ENCODE measurements at regions of chr6 and their contacts with region 1.

Region 1: DNA sequence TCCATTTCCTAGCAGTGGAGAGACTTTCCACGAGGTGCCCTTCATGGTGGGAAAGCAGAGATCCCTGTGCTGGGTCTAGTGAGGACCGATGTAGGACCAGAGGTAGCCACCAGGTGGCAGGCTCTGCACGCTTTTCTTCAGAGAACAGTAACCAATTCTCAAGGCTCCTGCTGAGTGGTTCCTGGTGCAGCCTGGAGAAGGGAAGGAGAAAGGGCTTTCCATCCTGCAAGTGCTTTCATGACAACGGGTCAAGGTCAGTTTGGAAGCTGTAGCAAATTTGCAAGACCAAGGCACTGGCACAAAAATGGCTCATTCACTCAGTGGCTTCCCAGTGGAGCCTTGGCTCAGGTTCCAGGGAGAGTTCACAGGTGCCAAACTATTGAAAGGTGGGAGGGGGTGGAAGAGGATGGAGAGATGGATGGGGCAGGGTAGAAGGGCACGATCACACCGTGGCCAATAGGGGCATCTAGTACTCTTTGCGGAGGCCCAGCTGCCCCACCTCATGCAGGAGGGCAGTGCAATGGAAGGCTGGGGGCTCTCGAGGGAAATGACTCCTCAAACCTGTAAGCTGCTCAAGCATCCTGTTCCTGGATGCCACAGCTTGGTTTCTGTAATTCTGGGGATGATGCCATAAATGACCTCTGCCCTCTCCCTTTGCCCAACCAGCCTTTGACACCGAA is 25.5 kb upstream of the KCNK16 start:
- DNase-seq: peak; percentile 84
- H3K4me3 ChIP-seq: no peak overlapping the region; a peak in 1 of 4 replicates
- H3K27ac ChIP-seq: no peak overlapping the region
- H3K4me1 ChIP-seq: peaks cover 0 to 1% of the 10 kb centered on the region in 2 experiments; a peak in 1 of 4 replicates
- H3K27me3 ChIP-seq: no peaks in the 10 kb centered on the region
- CTCF ChIP-seq: peak; percentile 85
- EP300 ChIP-seq: no peak
- RAD21 ChIP-seq: peak; percentile 86

Region 2: DNA sequence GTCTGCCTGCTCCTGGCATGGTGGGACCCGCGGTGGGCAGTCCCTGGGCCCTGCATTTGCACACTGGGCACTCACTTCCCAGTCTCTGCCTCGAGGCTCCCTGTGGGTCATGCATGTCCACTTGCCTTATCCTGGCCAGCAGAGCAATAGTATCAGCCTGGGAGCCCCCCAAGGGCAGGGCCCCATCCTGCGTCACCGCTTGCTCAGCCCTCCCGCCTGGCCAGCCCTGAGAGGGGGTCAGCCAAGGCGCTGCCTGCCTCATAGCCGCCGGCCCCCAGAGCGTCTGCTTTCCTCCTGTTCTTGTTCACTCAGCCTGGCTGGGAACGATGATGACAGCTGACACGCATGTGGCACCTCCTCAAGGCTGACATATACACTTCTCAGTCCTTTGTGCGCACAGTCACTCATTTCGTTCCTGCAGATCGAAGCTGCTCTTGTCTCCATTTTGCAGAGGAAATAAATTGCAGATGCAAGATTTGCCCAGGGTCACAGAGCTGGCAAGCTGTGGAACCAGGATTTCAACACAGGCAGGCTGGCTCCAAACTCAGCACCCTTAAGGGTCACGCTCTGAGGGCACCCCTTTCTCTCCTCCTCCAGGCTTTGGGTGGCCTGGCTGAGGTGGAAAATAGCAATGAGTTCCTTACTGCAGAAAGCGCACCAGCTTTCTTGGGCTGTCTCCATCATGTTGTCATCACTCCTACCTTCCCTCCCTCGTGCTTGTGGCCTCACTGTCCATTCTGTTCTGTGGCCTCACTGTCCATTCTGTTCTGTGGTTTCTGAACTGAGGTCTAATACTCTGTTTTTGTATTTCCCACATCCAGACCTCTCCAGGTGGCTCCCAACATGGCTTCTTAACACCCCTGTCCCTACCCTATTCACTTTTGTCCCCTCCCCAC is 51.1 kb before region 1 on chr6:
- CTCF ChIA-PET with region 1: no interaction called
- POLR2A ChIA-PET with region 1: no interaction called
- DNase-seq: peak; percentile 77
- H3K4me3 ChIP-seq: no peak overlapping the region
- H3K27ac ChIP-seq: no peak overlapping the region
- H3K4me1 ChIP-seq: peaks cover 0 to 10% of the 10 kb centered on the region in 2 experiments; a peak in 1 of 4 replicates
- H3K27me3 ChIP-seq: no peaks in the 10 kb centered on the region
- CTCF ChIP-seq: no peak
- EP300 ChIP-seq: no peak
- RAD21 ChIP-seq: no peak

Region 3: DNA sequence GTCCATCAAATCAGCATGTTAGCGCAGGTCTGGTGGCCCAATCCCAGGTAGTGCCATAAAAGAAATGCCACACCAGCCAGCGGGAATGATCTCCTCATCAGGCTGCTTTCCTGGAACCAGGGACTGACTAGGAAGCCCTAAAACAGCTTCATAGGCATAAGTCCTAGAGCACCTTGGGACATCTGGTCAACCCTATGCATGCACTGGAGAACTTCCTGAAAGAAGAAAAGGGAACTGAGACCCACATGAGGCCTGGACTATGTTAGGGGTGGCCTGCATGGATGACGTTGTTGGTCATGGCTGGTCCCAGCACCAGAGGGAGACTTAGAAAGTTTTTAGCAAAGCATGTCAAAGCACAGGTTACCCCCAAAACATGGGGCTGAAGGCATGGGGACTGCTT is 18.0 kb before region 1 on chr6:
- CTCF ChIA-PET with region 1: interaction called, 10 read pairs
- POLR2A ChIA-PET with region 1: no interaction called
- DNase-seq: no peak
- H3K4me3 ChIP-seq: no peak overlapping the region
- H3K27ac ChIP-seq: no peak overlapping the region
- H3K4me1 ChIP-seq: peaks cover 0 to 25% of the 10 kb centered on the region in 2 experiments; a peak in 2 of 4 replicates
- H3K27me3 ChIP-seq: no peaks in the 10 kb centered on the region
- CTCF ChIP-seq: no peak
- EP300 ChIP-seq: no peak
- RAD21 ChIP-seq: no peak

Region 4: GRCh38 chr6:39335780-39336545 is 12.1 kb before region 1 on chr6:
- CTCF ChIA-PET with region 1: interaction called, 25 read pairs
- POLR2A ChIA-PET with region 1: no interaction called
- DNase-seq: no peak
- H3K4me3 ChIP-seq: no peak overlapping the region
- H3K27ac ChIP-seq: no peak overlapping the region
- H3K4me1 ChIP-seq: peaks cover 0 to 27% of the 10 kb centered on the region in 2 experiments; a peak in 1 of 4 replicates
- H3K27me3 ChIP-seq: no peaks in the 10 kb centered on the region
- CTCF ChIP-seq: no peak
- EP300 ChIP-seq: no peak
- RAD21 ChIP-seq: no peak

Region 5: DNA sequence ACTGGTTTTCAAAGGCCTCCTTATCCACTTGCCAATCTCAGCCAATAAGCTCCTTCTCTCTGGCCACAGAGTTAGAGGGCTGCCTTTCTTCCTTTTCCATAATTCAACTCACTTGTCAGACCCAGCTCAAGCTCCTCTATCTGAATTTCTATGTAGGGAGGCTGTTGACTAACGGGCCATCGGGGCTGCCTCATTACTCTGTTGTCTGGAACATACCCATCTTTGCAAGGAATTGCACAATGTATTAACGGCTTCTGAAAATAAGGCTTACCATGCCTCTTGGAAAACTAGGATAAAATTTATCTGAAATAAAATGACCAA is 405.6 kb after region 1 on chr6:
- CTCF ChIA-PET with region 1: no interaction called
- POLR2A ChIA-PET with region 1: no interaction called
- DNase-seq: no peak
- H3K4me3 ChIP-seq: no peak overlapping the region
- H3K27ac ChIP-seq: no peak overlapping the region
- H3K4me1 ChIP-seq: no peaks in the 10 kb centered on the region
- H3K27me3 ChIP-seq: no peaks in the 10 kb centered on the region
- CTCF ChIP-seq: no peak
- EP300 ChIP-seq: no peak
- RAD21 ChIP-seq: no peak